ENCODE measurements at regions of chr6 and their contacts with region 1.

Region 1: GRCh38 chr6:37207903-37208456 is 38.0 kb downstream of the PIM1 start:
- DNase-seq: peak; percentile 48 to 77 (median 65)
- H3K4me3 ChIP-seq: no peak overlapping the region
- H3K27ac ChIP-seq: no peak overlapping the region
- H3K4me1 ChIP-seq: no peaks in the 10 kb centered on the region
- H3K27me3 ChIP-seq: no peaks in the 10 kb centered on the region
- CTCF ChIP-seq: peak in 2 of 3 donors; percentile 28 to 35
- EP300 ChIP-seq: no peak
- POLR2A ChIP-seq: no peak

Region 2: DNA sequence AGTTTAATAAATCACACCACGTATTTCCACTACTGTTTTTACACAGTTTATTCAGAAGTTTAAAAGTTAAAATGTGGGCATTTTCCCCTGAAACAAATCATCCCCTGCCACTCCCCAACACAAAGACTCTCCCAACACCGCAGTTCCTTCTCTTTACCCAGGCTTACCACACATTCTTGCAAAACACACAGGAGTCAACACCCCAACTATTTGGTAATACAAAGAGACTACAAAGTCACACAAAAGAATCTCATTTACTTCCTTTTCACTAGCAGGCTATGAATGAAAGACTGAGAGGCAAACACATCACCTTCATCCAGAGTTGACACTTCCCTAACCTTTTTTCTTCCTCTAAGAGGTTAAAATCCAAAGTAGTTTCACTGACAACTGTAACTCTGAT is 714.1 kb before region 1 on chr6:
- intact Hi-C with region 1: loop called in 1 of 4 experiments (anchors 10 kb)
- DNase-seq: no peak
- H3K4me3 ChIP-seq: no peak overlapping the region
- H3K27ac ChIP-seq: no peak overlapping the region
- H3K4me1 ChIP-seq: peaks cover 2% of the 10 kb centered on the region
- H3K27me3 ChIP-seq: no peaks in the 10 kb centered on the region
- CTCF ChIP-seq: no peak
- EP300 ChIP-seq: no peak
- POLR2A ChIP-seq: no peak

Region 3: DNA sequence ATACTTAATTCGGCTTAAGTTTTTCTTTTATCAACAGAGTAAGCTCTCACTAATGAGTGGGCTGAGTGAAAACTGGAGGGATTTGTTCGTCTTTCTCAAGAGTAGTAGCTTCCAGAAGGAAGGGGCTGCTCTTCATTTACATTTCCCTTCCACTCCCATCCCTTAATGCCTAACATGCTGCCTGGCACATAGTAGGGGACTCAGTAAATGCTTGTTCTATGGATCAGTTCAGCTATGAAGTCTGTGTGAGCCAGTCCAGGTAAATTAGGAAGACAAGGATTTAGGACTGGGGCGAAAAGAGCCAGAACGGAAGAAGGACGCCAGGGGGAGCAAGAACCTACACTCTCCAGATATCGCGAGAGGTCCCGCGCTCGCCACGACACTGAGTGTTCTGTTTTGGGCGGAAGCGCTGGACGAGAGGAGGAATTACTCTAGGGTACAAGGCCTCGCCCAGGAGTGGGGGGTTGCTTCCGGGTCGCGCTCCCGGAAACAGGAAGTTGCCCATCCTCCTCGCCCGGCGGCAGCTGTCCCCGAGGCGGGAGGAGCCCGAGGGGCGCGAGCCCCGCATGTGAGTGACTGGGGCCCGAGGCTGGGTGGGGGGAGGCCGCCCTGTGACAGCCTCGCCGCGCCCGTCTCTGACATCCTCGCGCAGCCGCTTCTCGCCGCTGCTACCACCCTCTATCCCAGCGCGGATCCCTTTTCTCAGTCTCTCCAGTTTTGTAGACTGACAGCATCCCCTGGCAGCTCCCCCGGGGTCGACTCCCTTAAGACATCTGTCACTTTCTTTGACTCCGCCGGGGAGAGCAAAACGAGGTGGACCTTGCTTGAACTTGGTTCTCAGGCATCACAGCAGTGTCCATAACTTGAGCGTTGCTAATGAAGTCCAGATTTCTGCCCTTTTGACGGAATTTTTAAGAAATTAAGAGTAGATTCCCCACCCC is 322.2 kb before region 1 on chr6 and contains the start of gene C6orf89:
- intact Hi-C with region 1: loop called in 2 of 4 experiments (anchors 10 kb)
- DNase-seq: peak; percentile 96 to 98 (median 98)
- H3K4me3 ChIP-seq: peak within 1 kb of the TSS; percentile 72
- H3K27ac ChIP-seq: peak within 1 kb of the TSS; percentile 67 to 78
- H3K4me1 ChIP-seq: peaks cover 3% of the 10 kb centered on the region
- H3K27me3 ChIP-seq: no peaks in the 10 kb centered on the region
- CTCF ChIP-seq: peak; percentile 87 to 97 (median 97)
- EP300 ChIP-seq: no peak
- POLR2A ChIP-seq: peak; percentile 83
- total RNA-seq, gene C6orf89: 23.1 to 73.8 (median 62.2) TPM

Region 4: DNA sequence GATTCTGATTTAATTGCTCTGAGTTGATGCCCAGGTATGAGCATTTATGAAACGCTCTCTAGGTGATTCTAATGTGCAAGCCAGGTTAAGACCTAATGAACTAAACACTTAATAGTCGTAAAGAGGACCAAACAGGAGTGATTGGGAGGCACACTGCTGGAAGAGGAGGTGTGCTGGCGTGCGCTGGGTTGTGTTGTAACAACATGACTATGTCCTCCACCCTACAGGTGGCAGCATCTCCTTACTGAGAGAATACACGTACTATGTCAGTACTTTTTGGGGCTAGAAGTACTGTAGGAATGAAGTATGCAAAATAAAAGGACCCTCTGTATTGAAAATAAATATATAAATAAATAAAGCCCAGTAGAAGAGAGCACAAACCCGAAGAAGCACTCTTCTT is 310.4 kb before region 1 on chr6:
- intact Hi-C with region 1: loop called in 1 of 4 experiments (anchors 10 kb)
- DNase-seq: no peak
- H3K4me3 ChIP-seq: no peak overlapping the region
- H3K27ac ChIP-seq: no peak overlapping the region
- H3K4me1 ChIP-seq: peaks cover 1% of the 10 kb centered on the region
- H3K27me3 ChIP-seq: no peaks in the 10 kb centered on the region
- CTCF ChIP-seq: peak in 1 of 3 donors; percentile 24
- EP300 ChIP-seq: no peak
- POLR2A ChIP-seq: no peak

Region 5: DNA sequence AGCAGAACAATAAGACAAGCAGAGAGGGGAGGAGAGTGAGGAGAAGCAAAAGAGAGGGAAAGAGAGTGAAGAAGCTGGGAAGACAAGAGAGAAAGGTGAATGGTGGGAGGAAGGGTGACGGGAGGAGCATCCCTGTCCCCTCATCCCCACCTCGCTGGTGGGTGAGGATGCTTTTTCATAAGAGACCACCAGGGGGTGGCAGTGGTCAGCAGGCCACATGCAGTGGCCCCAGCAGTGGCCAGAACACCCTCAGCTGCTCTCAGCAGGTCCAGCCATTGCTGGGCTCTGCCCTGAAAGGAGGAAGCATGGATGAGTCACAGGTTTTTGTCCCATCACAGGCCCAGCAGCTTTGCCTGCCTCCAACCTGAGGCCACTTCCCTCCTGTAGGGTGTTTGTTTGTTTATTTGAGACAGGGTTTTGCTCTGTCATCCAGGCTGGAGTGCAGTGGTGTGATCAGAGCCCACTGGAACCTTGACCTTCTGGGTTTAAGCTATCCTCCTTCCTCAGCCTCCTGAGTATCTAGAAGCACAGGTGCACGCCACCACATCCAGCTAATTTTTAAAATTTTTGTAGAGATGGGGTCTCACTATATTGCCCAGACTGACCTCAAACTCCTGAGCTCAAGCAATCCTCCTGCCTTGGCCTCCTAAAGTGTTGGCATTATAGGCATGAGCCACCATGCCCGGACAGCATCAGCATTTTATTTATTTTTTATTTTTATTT is 178.6 kb before region 1 on chr6:
- intact Hi-C with region 1: loop called in 3 of 4 experiments (anchors 2 to 5 kb)
- DNase-seq: peak; percentile 56 to 74 (median 64)
- H3K4me3 ChIP-seq: no peak overlapping the region
- H3K27ac ChIP-seq: no peak overlapping the region
- H3K4me1 ChIP-seq: no peaks in the 10 kb centered on the region
- H3K27me3 ChIP-seq: no peaks in the 10 kb centered on the region
- CTCF ChIP-seq: peak; percentile 55 to 68 (median 66)
- EP300 ChIP-seq: no peak
- POLR2A ChIP-seq: no peak

Region 6: DNA sequence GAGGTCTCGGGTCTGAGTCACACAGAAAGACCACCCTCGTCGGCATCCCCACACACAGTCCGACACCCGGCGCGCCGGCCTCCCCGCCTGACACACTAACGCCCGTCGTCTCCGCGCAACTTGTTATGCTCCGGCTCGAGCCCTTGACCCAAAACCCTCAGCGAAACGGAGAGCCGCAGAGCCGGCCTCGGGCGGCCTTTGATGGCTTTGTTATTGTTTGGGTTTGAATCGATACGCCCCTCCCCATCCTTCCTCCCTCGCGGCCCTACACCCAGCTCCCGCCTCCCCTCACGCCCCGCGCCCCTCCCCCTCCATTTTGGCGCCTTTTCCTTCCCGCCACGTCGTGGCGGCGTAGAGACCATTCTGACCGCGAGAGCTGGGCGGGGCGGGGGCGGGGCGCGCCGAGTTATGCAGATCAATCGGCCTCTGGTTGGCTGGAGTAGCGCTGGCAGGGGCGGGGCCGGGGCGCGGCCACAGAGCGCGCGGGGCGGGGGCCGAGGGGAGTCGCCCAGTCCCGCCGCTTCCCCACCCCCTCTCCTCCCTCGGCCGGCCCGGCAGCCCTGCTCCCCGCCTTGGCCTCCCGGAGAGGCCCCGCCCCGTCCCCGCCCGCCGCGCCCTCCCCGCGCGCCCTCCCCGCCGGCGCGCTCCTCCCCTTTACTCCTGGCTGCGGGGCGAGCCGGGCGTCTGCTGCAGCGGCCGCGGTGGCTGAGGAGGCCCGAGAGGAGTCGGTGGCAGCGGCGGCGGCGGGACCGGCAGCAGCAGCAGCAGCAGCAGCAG is 38.3 kb before region 1 on chr6 and contains the start of gene PIM1:
- intact Hi-C with region 1: loop called in 1 of 4 experiments (anchors 5 kb)
- DNase-seq: peak; percentile 99 to 100 (median 100)
- H3K4me3 ChIP-seq: peak within 1 kb of the TSS; percentile 84
- H3K27ac ChIP-seq: peak within 1 kb of the TSS; percentile 70 to 91
- H3K4me1 ChIP-seq: peaks cover 4% of the 10 kb centered on the region
- H3K27me3 ChIP-seq: no peaks in the 10 kb centered on the region
- CTCF ChIP-seq: no peak
- EP300 ChIP-seq: no peak
- POLR2A ChIP-seq: peak; percentile 90
- total RNA-seq, gene PIM1: 41.4 to 135 (median 64.9) TPM